Gastrocnemius medialis (tissue), 4 donors: ENCODE measurements at regions of chr9 and their contacts with region 1.

Region 1: GRCh38 chr9:105722099-105722498 is 27.8 kb downstream of the TMEM38B start:
- DNase-seq: no peak
- ATAC-seq: no peak
- H3K4me3 ChIP-seq: no peak overlapping the region
- H3K27ac ChIP-seq: no peak overlapping the region
- H3K4me1 ChIP-seq: peaks cover 11 to 20% of the 10 kb centered on the region in 2 donors
- H3K27me3 ChIP-seq: no peaks in the 10 kb centered on the region
- CTCF ChIP-seq: no peak
- POLR2A ChIP-seq: no peak

Region 2: DNA sequence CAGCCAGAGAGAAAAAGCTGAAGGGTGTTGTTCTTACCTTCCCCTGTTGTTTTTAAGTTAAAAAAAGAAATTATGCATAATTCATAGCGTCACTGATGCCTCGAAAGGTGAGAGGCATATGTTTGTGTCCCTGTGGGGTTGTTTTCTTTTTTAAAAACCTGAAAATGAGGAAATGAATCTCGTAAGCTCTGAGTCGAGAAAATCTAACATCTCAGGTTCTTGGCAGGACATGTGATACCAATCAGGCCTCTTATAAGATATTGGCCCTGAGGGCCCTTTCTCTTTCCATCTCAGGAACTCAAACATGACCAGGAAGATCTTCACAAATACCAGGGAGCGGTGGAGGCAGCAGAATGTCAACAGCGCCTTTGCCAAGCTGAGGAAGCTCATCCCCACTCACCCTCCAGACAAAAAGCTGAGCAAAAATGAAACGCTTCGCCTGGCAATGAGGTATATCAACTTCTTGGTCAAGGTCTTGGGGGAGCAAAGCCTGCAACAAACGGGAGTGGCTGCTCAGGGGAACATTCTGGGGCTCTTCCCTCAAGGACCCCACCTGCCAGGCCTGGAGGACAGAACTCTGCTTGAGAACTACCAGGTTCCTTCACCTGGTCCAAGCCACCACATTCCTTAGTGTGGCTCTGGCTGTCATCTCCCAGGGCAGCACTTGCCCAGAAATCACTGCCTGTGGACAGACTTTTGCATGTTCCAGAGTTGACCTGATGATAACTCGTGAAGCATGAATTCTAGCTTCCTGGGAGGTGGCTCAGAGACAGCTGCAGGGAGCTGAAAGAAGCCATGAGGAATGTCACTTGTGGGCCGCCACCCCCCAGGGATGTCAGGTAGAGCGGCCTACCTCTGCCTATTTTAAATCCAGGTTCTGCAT is 59.7 kb before region 1 on chr9 and contains the start of gene TAL2:
- in situ Hi-C with region 1: loop called in 1 of 4 experiments (anchors 10 kb)
- intact Hi-C with region 1: no loop called
- DNase-seq: no peak
- ATAC-seq: peak in 1 of 2 donors; percentile 32
- H3K4me3 ChIP-seq: no peak within 1 kb of the TSS
- H3K27ac ChIP-seq: peak within 1 kb of the TSS; percentile 21 to 77 (median 54)
- H3K4me1 ChIP-seq: peaks cover 5 to 14% of the 10 kb centered on the region in 2 donors
- H3K27me3 ChIP-seq: no peaks in the 10 kb centered on the region
- CTCF ChIP-seq: no peak
- POLR2A ChIP-seq: no peak
- total RNA-seq, gene TAL2: not detected